Endothelial cell of umbilical vein (primary cell): ENCODE measurements at regions of chr3 and their contacts with region 1.

Region 1: GRCh38 chr3:149726716-149727407 is 25.4 kb downstream of the COMMD2 start:
- DNase-seq: no peak
- H3K4me3 ChIP-seq: no peak overlapping the region
- H3K27ac ChIP-seq: no peak overlapping the region
- H3K4me1 ChIP-seq: no peaks in the 10 kb centered on the region
- H3K27me3 ChIP-seq: no peaks in the 10 kb centered on the region
- CTCF ChIP-seq: no peak
- POLR2A ChIP-seq: no peak

Region 2: DNA sequence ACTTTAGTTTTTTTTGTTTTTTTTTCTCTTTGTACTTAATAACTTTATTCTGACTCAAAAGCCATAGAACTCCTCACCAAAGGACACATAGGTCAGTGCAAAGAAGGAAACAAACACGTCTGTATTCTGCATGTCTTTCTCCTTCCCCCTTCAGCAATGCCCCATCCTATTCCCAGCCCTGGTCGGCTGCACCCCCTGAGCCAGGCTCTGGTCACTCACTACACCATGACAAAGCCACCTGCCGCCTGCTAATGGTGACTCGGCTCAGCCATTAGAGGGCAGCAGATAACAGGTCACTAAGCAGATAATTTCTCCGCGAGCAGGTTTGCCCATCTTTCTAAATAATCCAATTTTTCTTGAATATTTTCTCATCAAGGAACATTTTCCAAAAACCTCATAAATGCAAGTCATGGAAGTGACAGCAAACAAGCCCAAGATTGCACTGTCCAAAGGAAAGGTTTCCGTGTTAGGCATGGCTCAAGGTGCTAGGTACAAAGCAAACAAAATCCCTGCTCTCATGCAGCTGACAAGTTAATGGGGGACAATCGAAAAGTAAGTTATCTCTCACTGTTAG is 214.6 kb before region 1 on chr3:
- CTCF ChIA-PET with region 1: interaction called, 3 read pairs
- POLR2A ChIA-PET with region 1: no interaction called
- dilution Hi-C with region 1: loop called (anchors 25 kb)
- intact Hi-C with region 1: no loop called
- DNase-seq: peak; percentile 77
- H3K4me3 ChIP-seq: no peak overlapping the region
- H3K27ac ChIP-seq: no peak overlapping the region
- H3K4me1 ChIP-seq: peaks cover 18% of the 10 kb centered on the region
- H3K27me3 ChIP-seq: no peaks in the 10 kb centered on the region
- CTCF ChIP-seq: peak; percentile 66 to 71
- POLR2A ChIP-seq: no peak

Region 3: DNA sequence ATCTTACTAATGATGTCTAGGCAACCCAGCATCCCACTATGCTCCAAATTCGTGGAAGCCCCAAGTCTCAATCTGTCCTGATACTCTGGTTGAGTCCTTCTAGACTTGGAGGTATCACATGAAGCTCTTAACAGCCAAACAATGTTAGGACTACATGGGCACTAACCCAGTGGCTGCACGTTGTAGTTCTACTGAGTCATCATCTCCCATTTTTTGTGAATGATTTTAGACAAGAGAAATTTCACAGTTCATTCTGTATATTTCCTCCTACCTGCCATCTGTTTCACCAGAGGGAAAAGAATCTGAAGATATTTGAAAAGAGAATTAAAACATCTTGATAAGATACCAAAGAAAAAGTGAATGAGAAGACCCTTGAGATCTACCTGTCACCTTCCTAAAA is 59.3 kb before region 1 on chr3:
- CTCF ChIA-PET with region 1: no interaction called
- POLR2A ChIA-PET with region 1: no interaction called
- dilution Hi-C with region 1: no loop called
- intact Hi-C with region 1: no loop called
- DNase-seq: no peak
- H3K4me3 ChIP-seq: no peak overlapping the region
- H3K27ac ChIP-seq: no peak overlapping the region
- H3K4me1 ChIP-seq: no peaks in the 10 kb centered on the region
- H3K27me3 ChIP-seq: no peaks in the 10 kb centered on the region
- CTCF ChIP-seq: no peak
- POLR2A ChIP-seq: no peak